Activated CD8-positive, alpha-beta T cell treated with anti-CD3 and anti-CD28 coated beads for 36 hours (primary cell): ENCODE measurements at regions of chr16 and their contacts with region 1.

Region 1: DNA sequence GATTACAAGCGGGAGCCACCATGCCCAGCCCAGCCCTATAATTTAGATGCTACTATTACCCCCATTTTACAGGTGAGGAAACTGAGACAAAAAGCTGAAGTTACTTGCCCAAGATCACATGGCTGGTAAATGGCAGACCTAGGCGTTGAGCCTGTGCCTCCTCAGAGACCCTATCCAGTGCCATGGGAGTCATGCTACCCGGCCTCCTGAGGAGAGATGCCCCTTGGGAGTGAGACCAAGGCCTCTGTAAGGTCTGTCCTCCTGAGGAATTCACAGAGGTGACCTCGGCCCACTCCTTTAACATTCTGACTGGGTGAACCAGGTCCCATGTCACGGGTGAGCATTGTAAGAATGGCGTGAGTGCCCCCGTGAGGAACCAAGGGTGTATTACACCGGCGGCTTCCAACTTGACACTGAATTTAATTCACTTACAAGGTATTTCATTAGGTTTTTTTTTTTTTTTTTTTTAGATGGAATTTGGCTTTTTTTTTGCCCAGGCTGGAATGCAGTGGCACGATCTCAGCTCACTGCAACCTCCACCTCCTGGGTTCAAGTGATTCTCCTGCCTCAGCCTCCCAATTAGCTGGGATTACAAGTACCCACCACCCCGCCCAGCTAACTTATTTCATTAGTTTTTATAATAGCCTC is 95.7 kb downstream of the ABCC6 start:
- DNase-seq: peak; percentile 77
- ATAC-seq: peak; percentile 97
- H3K4me3 Mint-ChIP-seq: no peak overlapping the region
- H3K27ac Mint-ChIP-seq: peak overlapping the region; percentile 64
- H3K4me1 Mint-ChIP-seq: peaks cover 3% of the 10 kb centered on the region
- H3K27me3 Mint-ChIP-seq: no peaks in the 10 kb centered on the region
- CTCF ChIP-seq: peak; percentile 85

Region 2: DNA sequence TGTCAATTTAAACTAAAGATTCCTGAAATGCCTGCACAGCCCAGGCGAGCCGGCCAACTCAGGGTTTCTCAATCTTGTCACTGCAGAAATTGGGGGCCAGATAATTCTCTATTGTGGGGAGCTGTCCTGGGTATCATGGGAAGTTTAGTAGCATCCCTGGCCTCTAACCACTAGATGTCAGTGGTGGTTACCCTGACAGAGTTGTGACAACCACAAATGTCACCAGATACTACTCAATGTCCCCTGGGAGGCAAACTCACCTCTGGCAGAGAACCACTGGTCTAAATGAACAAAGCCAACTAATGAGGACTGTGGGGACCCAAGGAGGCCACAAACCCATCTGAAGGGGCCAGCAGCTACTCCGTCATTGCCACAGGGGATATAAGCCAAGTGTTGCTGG is 361.7 kb before region 1 on chr16:
- CTCF ChIA-PET with region 1: interaction called, 6 read pairs
- POLR2A ChIA-PET with region 1: no interaction called
- intact Hi-C with region 1: loop called (anchors 5 kb)
- DNase-seq: peak; percentile 57
- ATAC-seq: peak; percentile 90
- H3K4me3 Mint-ChIP-seq: no peak overlapping the region
- H3K27ac Mint-ChIP-seq: no peak overlapping the region
- H3K4me1 Mint-ChIP-seq: no peaks in the 10 kb centered on the region
- H3K27me3 Mint-ChIP-seq: peaks cover 12% of the 10 kb centered on the region
- CTCF ChIP-seq: peak; percentile 41

Region 3: GRCh38 chr16:16146380-16147315 is 19.1 kb after region 1 on chr16:
- CTCF ChIA-PET with region 1: no interaction called
- POLR2A ChIA-PET with region 1: no interaction called
- intact Hi-C with region 1: no loop called
- DNase-seq: no peak
- ATAC-seq: no peak
- H3K4me3 Mint-ChIP-seq: no peak overlapping the region
- H3K27ac Mint-ChIP-seq: no peak overlapping the region
- H3K4me1 Mint-ChIP-seq: peaks cover 2% of the 10 kb centered on the region
- H3K27me3 Mint-ChIP-seq: no peaks in the 10 kb centered on the region
- CTCF ChIP-seq: no peak

Region 4: DNA sequence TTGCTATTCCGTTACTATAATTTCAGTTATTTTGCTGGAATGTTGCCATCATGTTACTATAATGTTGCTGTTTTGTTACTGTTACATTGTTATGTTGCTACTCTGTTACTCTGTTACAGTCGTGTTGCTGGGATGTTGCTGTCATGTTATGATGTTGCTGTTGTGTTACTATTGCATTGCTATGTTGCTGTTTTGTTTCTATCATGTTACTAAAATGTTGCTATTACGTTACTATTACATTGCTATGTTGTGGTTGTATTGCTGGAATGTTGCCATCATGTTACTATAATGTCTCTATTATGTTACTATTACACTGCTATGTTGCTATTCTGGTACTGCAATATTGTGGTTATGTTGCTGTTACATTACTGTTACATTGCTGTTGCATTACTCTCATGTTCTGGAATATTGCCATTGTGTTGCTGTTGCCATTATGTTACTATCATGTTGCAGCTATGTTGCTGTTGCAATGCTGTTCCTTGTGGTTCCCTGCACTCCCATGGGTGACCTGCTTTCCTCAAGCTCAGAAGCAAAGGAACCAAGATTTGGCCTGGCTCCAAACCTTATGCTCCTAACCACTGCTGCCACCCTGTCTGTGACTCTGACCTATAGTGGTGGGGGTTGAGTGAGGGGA is 31.3 kb after region 1 on chr16:
- CTCF ChIA-PET with region 1: no interaction called
- POLR2A ChIA-PET with region 1: no interaction called
- intact Hi-C with region 1: no loop called
- DNase-seq: no peak
- ATAC-seq: no peak
- H3K4me3 Mint-ChIP-seq: no peak overlapping the region
- H3K27ac Mint-ChIP-seq: no peak overlapping the region
- H3K4me1 Mint-ChIP-seq: no peaks in the 10 kb centered on the region
- H3K27me3 Mint-ChIP-seq: peaks cover 2% of the 10 kb centered on the region
- CTCF ChIP-seq: no peak